Endothelial cell of umbilical vein (primary cell): ENCODE measurements at regions of chr1 and their contacts with region 1.

Region 1: GRCh38 chr1:168225476-168226190 is at the start of gene SFT2D2:
- DNase-seq: peak; percentile 78
- H3K4me3 ChIP-seq: peak within 1 kb of the TSS; percentile 63 to 88 (median 65)
- H3K27ac ChIP-seq: peak within 1 kb of the TSS; percentile 83
- H3K4me1 ChIP-seq: peaks cover 23% of the 10 kb centered on the region
- H3K27me3 ChIP-seq: peaks cover 6 to 7% of the 10 kb centered on the region in 2 experiments
- CTCF ChIP-seq: no peak
- POLR2A ChIP-seq: peak; percentile 47
- total RNA-seq, gene SFT2D2: 63.8 and 68.1 TPM in 2 replicates

Region 2: DNA sequence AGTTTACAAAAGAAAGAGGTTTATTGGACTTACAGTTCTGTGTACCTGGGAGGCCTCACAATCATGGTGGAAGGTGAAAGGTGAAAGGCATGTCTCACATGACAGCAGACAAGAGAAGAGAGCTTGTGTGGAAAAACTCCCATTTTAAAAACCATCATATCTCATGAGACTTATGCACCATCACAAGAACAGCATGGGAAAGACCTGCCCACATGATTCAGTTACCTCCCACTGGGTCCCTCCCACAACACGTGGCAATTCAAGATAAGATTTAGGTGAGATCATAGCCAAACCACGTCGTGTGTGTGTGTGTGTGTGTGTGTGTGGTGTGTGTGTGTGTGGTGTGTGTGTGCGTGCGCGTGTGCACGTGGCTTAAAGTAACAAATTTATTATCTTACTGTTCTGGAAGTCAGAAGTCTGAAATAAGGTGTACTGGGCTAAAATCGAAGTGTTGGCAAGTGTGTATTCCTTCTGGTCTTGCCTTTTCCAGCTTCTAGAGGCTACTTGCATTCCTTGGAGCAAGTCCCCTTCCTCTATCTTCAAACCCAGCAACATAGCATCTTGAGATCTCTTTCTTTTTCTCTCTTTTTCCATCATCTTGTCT is 240.6 kb before region 1 on chr1:
- CTCF ChIA-PET with region 1: no interaction called
- POLR2A ChIA-PET with region 1: no interaction called
- dilution Hi-C with region 1: no loop called
- intact Hi-C with region 1: no loop called
- DNase-seq: no peak
- H3K4me3 ChIP-seq: no peak overlapping the region
- H3K27ac ChIP-seq: no peak overlapping the region
- H3K4me1 ChIP-seq: no peaks in the 10 kb centered on the region
- H3K27me3 ChIP-seq: no peaks in the 10 kb centered on the region
- CTCF ChIP-seq: no peak
- POLR2A ChIP-seq: no peak

Region 3: GRCh38 chr1:168136709-168137514 is 88.7 kb before region 1 on chr1 and contains the start of gene GPR161:
- CTCF ChIA-PET with region 1: interaction called, 4 read pairs
- POLR2A ChIA-PET with region 1: no interaction called
- dilution Hi-C with region 1: no loop called
- intact Hi-C with region 1: loop called (anchors 2 kb)
- DNase-seq: peak; percentile 63
- H3K4me3 ChIP-seq: peak within 1 kb of the TSS; percentile 73 to 92 (median 77)
- H3K27ac ChIP-seq: peak within 1 kb of the TSS; percentile 44
- H3K4me1 ChIP-seq: peaks cover 19% of the 10 kb centered on the region
- H3K27me3 ChIP-seq: no peaks in the 10 kb centered on the region
- CTCF ChIP-seq: no peak
- POLR2A ChIP-seq: peak; percentile 69
- total RNA-seq, gene GPR161: 34.8 and 36.5 TPM in 2 replicates

Region 4: DNA sequence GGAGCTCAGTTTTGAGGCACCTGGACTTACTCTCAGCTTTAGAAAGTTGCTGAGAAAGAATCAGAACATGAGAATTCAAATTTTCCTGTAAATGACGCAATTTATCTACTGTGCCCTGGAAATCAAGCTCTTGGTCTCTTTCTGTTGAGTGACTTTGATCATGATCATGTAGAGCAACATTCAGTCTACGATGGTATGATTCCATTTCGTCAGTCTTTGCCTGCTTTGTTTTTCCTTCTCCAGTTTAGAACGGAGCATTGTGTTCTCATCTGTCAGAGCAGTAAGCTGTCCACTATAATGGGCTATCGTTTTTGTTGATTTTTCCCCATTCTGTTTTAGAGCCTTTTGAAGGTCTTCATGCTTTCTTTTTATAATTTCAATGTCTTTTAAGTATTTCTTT is 20.9 kb after region 1 on chr1:
- CTCF ChIA-PET with region 1: no interaction called
- POLR2A ChIA-PET with region 1: no interaction called
- dilution Hi-C with region 1: no loop called
- intact Hi-C with region 1: no loop called
- DNase-seq: no peak
- H3K4me3 ChIP-seq: no peak overlapping the region
- H3K27ac ChIP-seq: no peak overlapping the region
- H3K4me1 ChIP-seq: no peaks in the 10 kb centered on the region
- H3K27me3 ChIP-seq: no peaks in the 10 kb centered on the region
- CTCF ChIP-seq: no peak
- POLR2A ChIP-seq: no peak

Region 5: DNA sequence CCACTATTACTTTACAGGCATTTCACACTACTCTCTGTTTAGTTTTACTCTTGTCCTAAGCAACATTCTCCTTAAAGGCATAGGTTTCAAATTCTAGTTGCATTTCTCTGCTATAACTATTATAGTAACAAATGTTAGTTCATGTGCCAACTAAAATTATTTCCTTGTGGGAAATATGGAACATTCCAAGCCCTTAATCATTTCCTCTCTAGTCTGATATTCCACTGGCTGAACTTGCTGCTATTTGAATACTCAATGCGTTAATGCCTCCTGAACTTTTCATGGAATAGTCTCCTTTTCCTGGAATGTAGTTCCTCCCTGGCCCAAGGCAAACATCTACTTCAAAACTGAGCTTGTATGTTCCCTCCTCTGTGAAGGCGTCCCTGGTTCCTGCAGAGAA is 35.8 kb after region 1 on chr1:
- CTCF ChIA-PET with region 1: interaction called, 4 read pairs
- POLR2A ChIA-PET with region 1: no interaction called
- dilution Hi-C with region 1: no loop called
- intact Hi-C with region 1: loop called (anchors 1 kb)
- DNase-seq: peak; percentile 90
- H3K4me3 ChIP-seq: peak overlapping the region in 1 of 3 experiments; percentile 39
- H3K27ac ChIP-seq: peak overlapping the region; percentile 84
- H3K4me1 ChIP-seq: peaks cover 28% of the 10 kb centered on the region
- H3K27me3 ChIP-seq: no peaks in the 10 kb centered on the region
- CTCF ChIP-seq: no peak
- POLR2A ChIP-seq: no peak

Region 6: GRCh38 chr1:168321945-168322344 is 96.3 kb after region 1 on chr1:
- CTCF ChIA-PET with region 1: interaction called, 9 read pairs
- POLR2A ChIA-PET with region 1: no interaction called
- dilution Hi-C with region 1: no loop called
- intact Hi-C with region 1: loop called (anchors 2 kb)
- DNase-seq: peak; percentile 56
- H3K4me3 ChIP-seq: no peak overlapping the region
- H3K27ac ChIP-seq: no peak overlapping the region
- H3K4me1 ChIP-seq: peaks cover 18% of the 10 kb centered on the region
- H3K27me3 ChIP-seq: no peaks in the 10 kb centered on the region
- CTCF ChIP-seq: peak; percentile 4 to 40
- POLR2A ChIP-seq: no peak

Region 7: GRCh38 chr1:169115891-169116585 is 890.4 kb after region 1 on chr1:
- CTCF ChIA-PET with region 1: no interaction called
- POLR2A ChIA-PET with region 1: no interaction called
- dilution Hi-C with region 1: no loop called
- intact Hi-C with region 1: loop called (anchors 10 kb)
- DNase-seq: no peak
- H3K4me3 ChIP-seq: no peak overlapping the region
- H3K27ac ChIP-seq: no peak overlapping the region
- H3K4me1 ChIP-seq: peaks cover 36% of the 10 kb centered on the region
- H3K27me3 ChIP-seq: no peaks in the 10 kb centered on the region
- CTCF ChIP-seq: no peak
- POLR2A ChIP-seq: no peak